ENCODE measurements at regions of chr6 and their contacts with region 1.

Region 1: DNA sequence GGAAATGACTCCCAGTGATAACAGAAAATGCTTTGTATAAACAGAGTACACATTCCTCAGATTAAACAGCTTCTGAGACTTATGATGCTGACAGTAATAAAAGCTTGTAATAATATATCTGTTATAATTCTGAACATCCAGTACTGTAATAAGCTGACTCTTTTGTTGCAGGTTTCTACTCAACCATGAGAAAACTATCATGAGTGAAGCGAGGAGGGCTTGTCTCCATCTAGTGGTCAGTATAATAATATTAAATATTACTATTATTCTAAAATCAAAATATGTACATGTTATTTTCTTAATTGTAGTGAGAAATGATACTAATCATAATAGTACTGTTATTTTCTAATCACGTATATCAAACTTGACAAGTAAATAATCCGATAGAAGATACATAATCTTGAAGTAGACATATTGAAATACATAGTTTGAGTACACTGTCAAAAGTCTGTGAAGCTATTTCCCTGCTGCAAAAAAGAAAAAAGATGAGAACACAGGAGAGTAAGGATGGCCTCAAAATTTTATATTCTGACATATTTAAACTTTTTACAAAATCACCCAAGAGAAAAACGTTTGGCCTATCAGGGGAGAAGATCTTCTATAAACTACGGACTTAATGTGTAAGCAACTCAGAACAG is 183.1 kb downstream of the MOXD1 start:
- DNase-seq: no peak
- H3K4me3 ChIP-seq: no peak overlapping the region
- H3K27ac ChIP-seq: no peak overlapping the region
- H3K27me3 ChIP-seq: peaks cover 0 to 3% (median 0%) of the 10 kb centered on the region in 45 donors
- CTCF ChIP-seq: peak; percentile 48 to 89 (median 68)

Region 2: DNA sequence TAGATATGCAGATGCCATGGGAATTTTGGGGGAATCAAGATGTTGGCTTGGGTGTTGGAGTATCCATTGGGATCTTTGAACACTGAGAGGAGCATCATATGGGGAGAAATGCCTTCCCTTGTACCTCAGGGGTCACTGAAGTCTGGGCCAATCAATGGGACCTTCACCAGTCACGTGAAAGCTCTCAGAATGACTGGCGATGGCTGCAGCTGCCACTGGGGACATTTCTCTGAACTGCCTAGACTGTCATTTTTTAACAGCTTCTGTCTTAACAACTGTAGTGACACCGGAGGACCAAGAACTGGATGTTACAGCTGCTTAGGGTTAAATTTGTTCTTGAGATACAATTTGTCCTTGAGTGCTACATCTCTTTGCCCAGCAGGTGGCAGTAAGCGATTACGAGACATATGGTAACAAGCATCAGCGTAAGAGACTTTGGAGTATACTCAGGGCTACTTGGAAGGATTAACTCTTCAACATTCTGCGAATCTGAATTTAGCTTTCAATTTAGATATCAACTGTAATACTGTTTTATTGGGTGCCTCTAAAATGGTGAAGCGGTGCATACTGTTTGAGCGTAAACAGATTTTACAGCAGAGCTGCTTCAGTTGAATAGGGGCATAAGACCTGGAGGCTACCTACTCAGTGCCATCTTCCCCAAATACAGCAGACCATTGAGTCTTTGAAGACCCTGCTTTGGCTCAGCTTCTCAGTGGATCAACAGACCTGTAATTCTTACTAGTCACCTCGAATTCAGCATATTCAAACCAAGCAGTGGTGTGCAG is 303.0 kb before region 1 on chr6:
- intact Hi-C with region 1: loop called (anchors 5 kb)
- DNase-seq: peak in 8 of 10 donors; percentile 11 to 82 (median 56)
- H3K4me3 ChIP-seq: peak overlapping the region in 20 of 59 donors; percentile 5 to 42 (median 20)
- H3K27ac ChIP-seq: no peak overlapping the region
- H3K27me3 ChIP-seq: peaks cover 0 to 9% (median 0%) of the 10 kb centered on the region in 45 donors
- CTCF ChIP-seq: peak; percentile 65 to 92 (median 85)

Region 3: DNA sequence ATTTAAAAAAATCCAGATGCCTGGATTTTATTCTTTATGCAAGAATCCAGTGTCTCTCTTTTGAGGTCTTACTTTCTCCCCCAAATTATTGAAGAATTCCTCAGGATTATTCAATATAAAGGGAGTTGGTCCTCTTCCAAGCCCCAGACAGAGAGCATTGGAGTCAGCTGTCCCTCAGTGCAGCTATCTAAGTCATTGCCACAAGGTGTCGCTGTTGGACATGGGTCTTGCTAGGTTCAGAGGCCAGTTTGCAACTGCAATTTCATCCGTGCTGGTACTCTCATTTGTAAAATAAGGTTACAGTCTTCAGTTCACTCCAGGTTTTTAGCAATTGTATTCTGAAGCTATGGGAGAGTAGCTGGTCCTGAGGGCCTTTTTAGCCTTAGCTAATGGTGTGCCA is 294.8 kb before region 1 on chr6:
- intact Hi-C with region 1: loop called (anchors 5 kb)
- DNase-seq: no peak
- H3K4me3 ChIP-seq: no peak overlapping the region
- H3K27ac ChIP-seq: no peak overlapping the region
- H3K27me3 ChIP-seq: peaks cover 0 to 8% (median 0%) of the 10 kb centered on the region in 45 donors
- CTCF ChIP-seq: peak in 55 of 56 donors; percentile 16 to 76 (median 58)

Region 4: DNA sequence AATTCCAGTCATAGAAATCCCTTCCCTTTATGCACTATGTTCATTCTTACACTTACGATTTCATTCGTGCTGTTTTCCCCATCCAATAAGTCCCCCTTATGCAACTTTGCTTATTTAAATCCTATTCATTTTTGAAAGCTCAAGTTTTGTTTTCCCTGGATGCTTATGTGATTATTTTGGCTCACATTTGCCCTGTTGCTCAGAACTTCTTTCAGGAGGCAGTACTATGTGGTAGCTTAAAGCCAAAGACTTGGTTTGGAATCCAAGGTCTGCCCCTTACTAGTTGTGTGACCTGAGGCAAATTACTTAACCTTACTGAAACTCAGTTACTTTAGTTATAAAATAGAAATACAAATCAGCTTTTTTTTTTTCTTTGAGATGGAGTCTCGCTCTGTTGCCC is 123.5 kb after region 1 on chr6:
- intact Hi-C with region 1: no loop called
- DNase-seq: no peak
- H3K4me3 ChIP-seq: no peak overlapping the region
- H3K27ac ChIP-seq: no peak overlapping the region
- H3K27me3 ChIP-seq: no peaks in the 10 kb centered on the region
- CTCF ChIP-seq: no peak

Measured in dorsolateral prefrontal cortex (tissue), 120 donors.